PC-9 (cell line): ENCODE measurements at regions of chr12 and their contacts with region 1.

Region 1: GRCh38 chr12:12032851-12033588 is 37.7 kb upstream of the BCL2L14 start:
- DNase-seq: peak; percentile 81 to 88
- H3K4me3 ChIP-seq: peak overlapping the region; percentile 28; the same call in 1 of the 2 replicates
- H3K27ac ChIP-seq: peak overlapping the region; percentile 14; the same call in 1 of the 2 replicates
- H3K4me1 ChIP-seq: peaks cover 7% of the 10 kb centered on the region
- H3K27me3 ChIP-seq: no peaks in the 10 kb centered on the region
- CTCF ChIP-seq: peak; percentile 95

Region 2: DNA sequence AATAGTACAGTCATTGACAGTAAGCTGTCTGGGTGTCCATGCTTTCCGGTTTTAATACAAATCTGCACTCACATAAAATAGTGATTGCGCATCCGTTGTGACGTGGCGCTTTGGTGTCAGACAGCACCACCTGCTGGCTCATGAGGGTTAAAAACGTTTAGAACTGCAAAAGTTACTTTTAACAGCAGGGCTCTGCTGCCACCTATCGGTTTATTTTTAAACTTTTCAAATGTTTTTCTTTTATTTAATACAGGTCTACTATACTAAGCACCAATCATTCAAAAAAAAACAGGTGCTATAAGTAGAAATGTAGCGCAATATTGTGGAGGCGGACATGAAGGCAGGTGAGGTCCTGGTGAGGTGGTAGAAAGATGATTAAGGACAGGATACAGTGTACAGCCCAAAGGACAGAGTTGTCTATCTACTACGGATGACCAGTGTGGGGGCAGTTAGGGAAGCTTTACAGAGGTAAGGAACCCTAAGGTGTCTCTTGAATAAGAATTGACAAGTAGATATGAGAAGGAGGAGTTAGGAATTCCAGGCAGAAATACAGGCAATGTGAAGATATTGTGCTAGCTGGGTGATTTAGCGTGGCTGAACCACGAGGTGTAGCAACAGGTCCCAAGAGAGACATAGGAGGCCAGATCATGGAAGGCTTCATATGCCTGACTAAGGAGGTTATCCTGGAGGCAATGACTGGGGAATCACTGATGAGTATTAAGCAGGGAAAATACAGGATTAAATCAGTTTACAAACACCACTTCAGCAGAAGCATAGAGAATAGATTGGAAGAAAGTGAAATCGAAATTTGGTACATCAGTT is 546.2 kb before region 1 on chr12:
- CTCF ChIA-PET with region 1: no interaction called
- POLR2A ChIA-PET with region 1: no interaction called
- intact Hi-C with region 1: loop called (anchors 5 kb)
- DNase-seq: peak; percentile 66 to 71
- H3K4me3 ChIP-seq: no peak overlapping the region
- H3K27ac ChIP-seq: no peak overlapping the region
- H3K4me1 ChIP-seq: peaks cover 12% of the 10 kb centered on the region
- H3K27me3 ChIP-seq: no peaks in the 10 kb centered on the region
- CTCF ChIP-seq: peak; percentile 99

Region 3: DNA sequence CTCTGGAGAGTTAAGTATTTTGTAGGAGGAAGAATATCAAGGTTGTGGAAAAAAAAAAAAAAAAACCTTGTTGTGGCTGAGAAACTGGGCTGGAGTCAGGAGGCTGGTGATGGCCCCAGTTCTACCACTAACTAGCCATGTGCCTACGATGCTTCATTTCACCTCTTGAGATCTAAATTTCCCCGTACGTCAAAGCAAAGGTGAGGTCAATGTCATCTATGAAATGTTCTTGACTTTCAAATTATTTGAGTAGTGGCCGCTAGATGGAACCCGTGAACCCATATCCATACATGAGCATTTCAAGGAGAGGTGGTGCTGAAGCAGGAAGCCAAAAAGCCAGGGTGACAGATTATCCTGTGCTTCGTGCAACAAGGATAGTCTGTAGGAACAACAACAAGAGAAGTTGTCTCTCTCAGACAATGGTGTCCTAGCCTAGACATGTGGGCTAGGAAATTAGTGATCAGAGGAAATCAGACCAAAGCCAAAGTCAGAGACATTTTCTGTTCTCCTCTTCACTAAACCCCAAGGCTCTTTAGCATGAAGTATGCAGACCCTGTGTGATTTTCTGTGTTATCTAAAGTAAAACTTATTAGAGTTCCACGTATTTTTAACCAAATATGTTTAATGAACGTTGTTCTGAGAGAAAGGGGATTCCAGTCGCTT is 479.0 kb before region 1 on chr12:
- CTCF ChIA-PET with region 1: interaction called, 23 read pairs
- POLR2A ChIA-PET with region 1: no interaction called
- intact Hi-C with region 1: loop called (anchors 1 kb)
- DNase-seq: peak; percentile 54 to 61
- H3K4me3 ChIP-seq: no peak overlapping the region
- H3K27ac ChIP-seq: no peak overlapping the region
- H3K4me1 ChIP-seq: peaks cover 21% of the 10 kb centered on the region; the same call in 1 of the 2 replicates
- H3K27me3 ChIP-seq: no peaks in the 10 kb centered on the region
- CTCF ChIP-seq: peak; percentile 79

Region 4: DNA sequence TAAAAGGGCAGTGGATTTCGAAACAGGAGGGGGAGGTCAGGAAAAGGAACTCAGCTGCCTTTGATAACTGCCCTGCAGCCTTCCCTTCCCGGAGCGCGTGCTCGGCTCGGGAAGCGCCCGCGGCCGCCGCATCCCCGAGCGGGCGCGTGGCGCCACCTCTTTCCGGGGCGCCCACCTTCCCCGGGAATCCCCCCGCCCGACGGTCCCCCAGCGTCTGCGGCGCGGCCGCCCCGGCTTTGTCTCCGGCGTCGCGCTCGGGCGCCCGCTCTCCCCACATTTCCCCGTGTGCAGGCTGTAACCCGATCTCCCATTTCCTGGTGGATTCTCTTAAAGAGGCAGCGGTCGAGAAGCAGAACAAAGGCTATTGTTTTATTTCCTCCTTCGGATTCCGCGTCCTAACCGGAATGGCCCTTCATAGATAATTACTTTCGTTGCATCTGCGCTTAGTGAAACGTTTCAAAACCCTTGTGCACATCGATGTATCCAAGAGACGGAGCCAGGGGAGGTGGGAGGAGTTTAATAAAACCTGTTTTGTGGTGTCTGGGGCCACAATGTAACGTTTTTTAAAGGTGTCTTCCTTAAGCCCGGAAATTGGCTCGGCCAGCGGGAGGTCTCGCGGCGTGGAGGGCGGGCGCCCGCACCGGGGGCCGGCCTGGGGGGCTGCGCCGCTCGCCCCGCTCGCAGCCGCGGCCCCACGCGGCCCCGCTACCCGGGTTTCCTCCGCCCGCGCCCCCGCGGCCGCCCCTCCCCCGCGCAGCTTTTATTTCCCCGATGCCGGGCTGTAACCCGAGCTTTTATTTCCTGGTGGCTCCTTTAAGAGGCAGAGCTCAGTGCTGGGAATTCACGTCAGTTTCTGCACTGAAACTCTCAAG is 384.0 kb before region 1 on chr12 and contains the start of gene ETV6:
- CTCF ChIA-PET with region 1: no interaction called
- POLR2A ChIA-PET with region 1: no interaction called
- intact Hi-C with region 1: loop called (anchors 1 kb)
- DNase-seq: peak; percentile 83 to 89
- H3K4me3 ChIP-seq: peak within 1 kb of the TSS; percentile 85
- H3K27ac ChIP-seq: peak within 1 kb of the TSS; percentile 99
- H3K4me1 ChIP-seq: peaks cover 29% of the 10 kb centered on the region
- H3K27me3 ChIP-seq: no peaks in the 10 kb centered on the region
- CTCF ChIP-seq: no peak
- total RNA-seq, gene ETV6: 52.1 and 62.8 TPM in 2 replicates

Region 5: DNA sequence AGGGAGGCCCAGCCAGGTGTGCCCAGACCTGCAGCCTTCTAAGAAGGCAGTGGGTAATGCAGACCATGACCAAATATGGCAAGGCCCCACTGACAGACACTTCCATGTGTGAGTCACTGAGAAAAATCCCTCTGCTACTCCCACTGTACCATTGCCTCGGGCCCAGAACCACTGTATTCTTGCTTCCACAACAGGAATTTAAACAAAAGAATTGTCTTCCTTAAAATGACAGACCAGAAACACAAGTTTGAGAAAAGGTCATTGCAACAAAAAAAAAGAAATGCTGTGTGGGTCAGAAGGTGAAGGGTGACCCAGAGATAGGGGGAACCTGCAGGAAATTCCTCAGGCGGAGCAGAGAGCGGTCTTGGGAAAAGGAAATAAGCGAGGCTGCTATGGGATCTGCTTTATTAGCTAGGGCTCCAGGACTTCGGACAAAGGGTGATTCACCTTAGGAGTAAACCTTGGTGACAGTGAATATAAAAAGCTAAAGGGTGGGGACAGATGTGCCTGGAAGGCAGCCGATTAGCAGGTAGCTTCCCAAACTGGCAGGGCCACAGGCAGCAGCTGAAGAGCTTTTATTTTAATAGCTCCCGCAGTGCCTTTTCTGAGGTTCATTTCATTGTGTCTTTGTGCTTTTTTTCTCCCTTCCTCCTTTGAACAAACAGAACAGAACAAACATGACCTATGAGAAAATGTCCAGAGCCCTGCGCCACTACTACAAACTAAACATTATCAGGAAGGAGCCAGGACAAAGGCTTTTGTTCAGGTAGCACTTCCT is 147.6 kb before region 1 on chr12:
- CTCF ChIA-PET with region 1: interaction called, 9 read pairs
- POLR2A ChIA-PET with region 1: interaction called, 4 read pairs
- intact Hi-C with region 1: loop called (anchors 2 kb)
- DNase-seq: peak; percentile 89 to 99
- H3K4me3 ChIP-seq: peak overlapping the region; percentile 35; the same call in 1 of the 2 replicates
- H3K27ac ChIP-seq: peak overlapping the region; percentile 99
- H3K4me1 ChIP-seq: peaks cover 39% of the 10 kb centered on the region
- H3K27me3 ChIP-seq: no peaks in the 10 kb centered on the region
- CTCF ChIP-seq: no peak

Region 6: GRCh38 chr12:12138203-12139154 is 105.5 kb after region 1 on chr12:
- CTCF ChIA-PET with region 1: interaction called, 22 read pairs
- POLR2A ChIA-PET with region 1: no interaction called
- intact Hi-C with region 1: no loop called
- DNase-seq: no peak
- H3K4me3 ChIP-seq: no peak overlapping the region
- H3K27ac ChIP-seq: no peak overlapping the region
- H3K4me1 ChIP-seq: no peaks in the 10 kb centered on the region
- H3K27me3 ChIP-seq: no peaks in the 10 kb centered on the region
- CTCF ChIP-seq: no peak

Region 7: DNA sequence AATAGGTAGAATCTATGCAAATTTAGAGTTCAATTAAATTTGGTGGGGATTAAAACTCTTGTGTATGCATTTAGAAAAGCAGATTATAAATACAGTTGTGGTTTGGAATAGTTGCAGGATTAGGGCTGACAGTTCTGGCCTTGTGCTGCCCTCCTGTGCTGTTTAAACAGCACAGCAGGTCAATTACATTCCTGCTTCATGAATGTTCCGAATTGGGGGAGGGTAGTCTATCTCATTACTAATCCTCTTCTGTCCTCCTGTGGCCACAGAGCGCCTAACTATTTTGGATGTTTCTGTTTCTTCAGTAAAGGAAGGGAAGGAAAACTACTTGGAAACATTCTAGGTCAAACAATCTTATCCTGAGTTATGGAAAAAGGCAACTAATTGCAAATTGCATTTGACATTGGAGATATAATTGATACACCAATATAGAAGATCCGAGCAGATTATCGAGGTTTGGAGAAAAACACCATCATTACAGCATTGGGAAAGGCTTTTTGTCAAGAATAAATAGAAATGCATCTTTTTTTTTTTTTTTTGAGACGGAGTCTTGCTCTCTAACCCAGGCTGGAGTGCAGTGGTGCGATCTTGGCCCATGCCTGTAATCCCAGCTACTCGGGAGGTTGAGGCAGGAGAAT is 671.7 kb after region 1 on chr12:
- CTCF ChIA-PET with region 1: no interaction called
- POLR2A ChIA-PET with region 1: no interaction called
- intact Hi-C with region 1: loop called (anchors 1 kb)
- DNase-seq: peak; percentile 65 to 83
- H3K4me3 ChIP-seq: no peak overlapping the region
- H3K27ac ChIP-seq: no peak overlapping the region
- H3K4me1 ChIP-seq: peaks cover 12% of the 10 kb centered on the region
- H3K27me3 ChIP-seq: no peaks in the 10 kb centered on the region
- CTCF ChIP-seq: peak; percentile 91